Naive thymus-derived CD4-positive, alpha-beta T cell (primary cell): ENCODE measurements at regions of chr14 and their contacts with region 1.

Region 1: DNA sequence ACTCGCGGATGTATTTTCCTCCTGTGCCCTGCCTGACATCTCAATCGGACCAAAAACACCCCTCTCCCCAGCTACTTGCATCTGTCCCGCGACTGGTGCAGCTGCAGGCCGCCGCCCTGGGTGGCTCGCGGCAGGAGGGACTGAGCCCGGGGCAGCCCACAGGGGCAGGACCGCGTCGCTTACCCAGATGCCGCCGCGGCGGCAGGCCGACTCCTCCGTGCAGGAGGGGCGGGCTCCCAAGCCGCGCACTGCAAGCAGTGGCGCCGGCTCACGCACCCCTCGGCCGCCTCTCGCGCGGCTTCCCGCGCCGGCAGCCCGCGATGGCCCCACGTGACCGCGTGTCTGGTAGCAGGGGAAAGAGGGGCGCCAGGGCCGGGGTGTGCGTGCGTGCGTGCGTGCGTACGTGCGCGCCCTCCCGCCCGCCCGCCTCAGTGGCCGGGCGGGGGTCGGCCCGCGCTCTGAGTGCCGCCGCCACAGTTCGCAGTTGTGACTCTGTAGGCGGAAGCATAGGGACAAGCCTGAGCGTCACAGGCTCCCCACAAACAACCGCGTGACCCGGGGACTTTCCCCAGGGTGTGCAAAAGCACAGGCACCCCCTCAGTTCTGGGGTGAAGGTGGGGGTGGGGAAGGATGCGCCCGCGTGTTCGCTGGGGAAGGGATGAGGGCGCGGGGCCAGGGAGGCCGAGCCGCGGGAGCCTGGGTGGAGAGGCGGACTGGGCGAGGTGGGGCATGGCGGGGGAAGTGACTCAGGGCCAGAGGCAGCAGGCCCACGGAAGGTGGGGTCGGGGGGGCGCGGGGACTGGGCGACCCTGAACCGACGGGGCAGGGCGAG is at the start of gene ZBTB25:
- DNase-seq: peak; percentile 88 to 100 (median 98)
- ATAC-seq: peak; percentile 81
- H3K4me3 ChIP-seq: peak within 1 kb of the TSS; percentile 88
- H3K4me3 Mint-ChIP-seq: peak within 1 kb of the TSS; percentile 88 to 100 (median 98)
- H3K27ac ChIP-seq: peak within 1 kb of the TSS; percentile 99
- H3K27ac Mint-ChIP-seq: peak within 1 kb of the TSS; percentile 96 to 100 (median 100)
- H3K4me1 ChIP-seq: peaks cover 41 to 49% of the 10 kb centered on the region in 2 donors
- H3K4me1 Mint-ChIP-seq: peaks cover 44 to 70% (median 55%) of the 10 kb centered on the region in 7 donors
- H3K27me3 ChIP-seq: no peaks in the 10 kb centered on the region
- H3K27me3 Mint-ChIP-seq: peaks cover 0 to 3% (median 0%) of the 10 kb centered on the region in 5 donors
- total RNA-seq, gene ZBTB25: 37.6 to 88.0 (median 60.6) TPM

Region 2: GRCh38 chr14:63727774-63728728 is 775.6 kb before region 1 on chr14 and contains the start of gene SGPP1:
- CTCF ChIA-PET with region 1: no interaction called
- POLR2A ChIA-PET with region 1: interaction called, 3 read pairs
- intact Hi-C with region 1: loop called in 1 of 2 experiments (anchors 2 kb)
- DNase-seq: peak; percentile 60 to 83 (median 77)
- ATAC-seq: peak; percentile 95
- H3K4me3 ChIP-seq: peak within 1 kb of the TSS; percentile 99
- H3K4me3 Mint-ChIP-seq: peak within 1 kb of the TSS; percentile 97 to 100 (median 99)
- H3K27ac ChIP-seq: peak within 1 kb of the TSS; percentile 89
- H3K27ac Mint-ChIP-seq: peak within 1 kb of the TSS; percentile 94 to 99 (median 97)
- H3K4me1 ChIP-seq: peaks cover 11 to 16% of the 10 kb centered on the region in 2 donors
- H3K4me1 Mint-ChIP-seq: peaks cover 29 to 51% (median 44%) of the 10 kb centered on the region in 7 donors
- H3K27me3 ChIP-seq: no peaks in the 10 kb centered on the region
- H3K27me3 Mint-ChIP-seq: peaks cover 0 to 22% (median 0%) of the 10 kb centered on the region in 5 donors
- total RNA-seq, gene SGPP1: 15.1 to 17.7 (median 15.7) TPM

Region 3: GRCh38 chr14:64338616-64339316 is 164.9 kb before region 1 on chr14:
- CTCF ChIA-PET with region 1: interaction called, 17 read pairs
- POLR2A ChIA-PET with region 1: interaction called, 9 read pairs
- intact Hi-C with region 1: loop called (anchors 1 kb)
- DNase-seq: peak; percentile 50 to 84 (median 79)
- ATAC-seq: peak; percentile 87
- H3K4me3 ChIP-seq: peak overlapping the region; percentile 57
- H3K4me3 Mint-ChIP-seq: peak overlapping the region; percentile 87 to 99 (median 92)
- H3K27ac ChIP-seq: peak overlapping the region; percentile 72
- H3K27ac Mint-ChIP-seq: peak overlapping the region; percentile 81 to 91 (median 86)
- H3K4me1 ChIP-seq: peaks cover 5 to 10% of the 10 kb centered on the region in 2 donors
- H3K4me1 Mint-ChIP-seq: peaks cover 6 to 36% (median 19%) of the 10 kb centered on the region in 7 donors
- H3K27me3 ChIP-seq: no peaks in the 10 kb centered on the region
- H3K27me3 Mint-ChIP-seq: no peaks in the 10 kb centered on the region

Region 4: DNA sequence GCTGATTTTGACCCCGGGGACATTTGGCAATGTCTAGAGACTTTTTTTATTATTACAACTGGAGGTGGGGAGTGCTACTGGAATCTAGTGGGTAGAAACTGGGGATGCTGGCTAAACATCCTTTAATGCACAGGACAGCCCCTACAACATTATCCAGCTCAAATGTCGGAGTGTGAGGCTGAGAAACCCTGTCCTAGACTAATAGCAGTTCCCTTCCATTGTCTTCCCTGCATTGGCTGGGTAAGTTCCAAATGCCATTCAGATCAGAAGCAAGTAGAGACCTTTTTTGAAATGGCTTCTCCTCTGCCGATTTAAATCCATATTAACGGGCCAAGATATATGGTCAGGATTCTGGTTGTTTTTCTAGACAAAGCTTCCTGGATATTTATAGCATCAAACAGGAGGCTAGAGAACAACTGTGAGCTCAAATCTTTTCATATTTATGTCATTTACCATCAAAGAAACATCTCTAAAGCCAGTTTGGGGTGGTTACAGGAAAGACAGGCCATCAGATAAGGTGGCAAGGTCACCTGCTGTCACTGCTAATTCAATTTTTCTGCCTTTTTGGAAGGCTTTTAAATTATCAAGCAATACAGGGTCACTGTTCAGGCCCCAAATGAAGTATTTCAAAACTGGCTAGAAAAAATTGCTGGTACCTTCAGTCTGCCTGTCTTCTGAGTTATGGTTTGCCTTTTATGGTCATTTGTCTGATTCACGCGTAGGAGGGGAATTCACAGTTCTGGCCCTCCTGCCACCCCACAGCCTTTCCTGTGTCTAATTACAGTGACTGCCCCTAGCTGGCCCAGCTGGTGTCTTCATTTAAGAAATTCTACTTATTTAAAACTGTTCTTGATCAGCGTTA is 58.5 kb before region 1 on chr14:
- CTCF ChIA-PET with region 1: no interaction called
- POLR2A ChIA-PET with region 1: no interaction called
- intact Hi-C with region 1: loop called in 1 of 2 experiments (anchors 5 kb)
- DNase-seq: peak in 1 of 9 donors; percentile 45
- ATAC-seq: peak; percentile 86
- H3K4me3 ChIP-seq: no peak overlapping the region
- H3K4me3 Mint-ChIP-seq: peak overlapping the region in 1 of 10 donors; percentile 71
- H3K27ac ChIP-seq: no peak overlapping the region
- H3K27ac Mint-ChIP-seq: peak overlapping the region in 8 of 9 donors; percentile 32 to 88 (median 64)
- H3K4me1 ChIP-seq: peaks cover 0 to 16% of the 10 kb centered on the region in 2 donors
- H3K4me1 Mint-ChIP-seq: peaks cover 12 to 35% (median 16%) of the 10 kb centered on the region in 7 donors
- H3K27me3 ChIP-seq: no peaks in the 10 kb centered on the region
- H3K27me3 Mint-ChIP-seq: no peaks in the 10 kb centered on the region

Region 5: GRCh38 chr14:64478634-64479250 is 25.0 kb before region 1 on chr14:
- CTCF ChIA-PET with region 1: interaction called, 33 read pairs
- POLR2A ChIA-PET with region 1: interaction called, 157 read pairs
- intact Hi-C with region 1: no loop called
- DNase-seq: peak in 5 of 9 donors; percentile 18 to 38 (median 32)
- ATAC-seq: peak; percentile 51
- H3K4me3 ChIP-seq: no peak overlapping the region
- H3K4me3 Mint-ChIP-seq: no peak overlapping the region
- H3K27ac ChIP-seq: no peak overlapping the region
- H3K27ac Mint-ChIP-seq: peak overlapping the region in 1 of 9 donors; percentile 55
- H3K4me1 ChIP-seq: no peaks in the 10 kb centered on the region
- H3K4me1 Mint-ChIP-seq: peaks cover 0 to 22% (median 9%) of the 10 kb centered on the region in 7 donors
- H3K27me3 ChIP-seq: no peaks in the 10 kb centered on the region
- H3K27me3 Mint-ChIP-seq: no peaks in the 10 kb centered on the region

Region 6: DNA sequence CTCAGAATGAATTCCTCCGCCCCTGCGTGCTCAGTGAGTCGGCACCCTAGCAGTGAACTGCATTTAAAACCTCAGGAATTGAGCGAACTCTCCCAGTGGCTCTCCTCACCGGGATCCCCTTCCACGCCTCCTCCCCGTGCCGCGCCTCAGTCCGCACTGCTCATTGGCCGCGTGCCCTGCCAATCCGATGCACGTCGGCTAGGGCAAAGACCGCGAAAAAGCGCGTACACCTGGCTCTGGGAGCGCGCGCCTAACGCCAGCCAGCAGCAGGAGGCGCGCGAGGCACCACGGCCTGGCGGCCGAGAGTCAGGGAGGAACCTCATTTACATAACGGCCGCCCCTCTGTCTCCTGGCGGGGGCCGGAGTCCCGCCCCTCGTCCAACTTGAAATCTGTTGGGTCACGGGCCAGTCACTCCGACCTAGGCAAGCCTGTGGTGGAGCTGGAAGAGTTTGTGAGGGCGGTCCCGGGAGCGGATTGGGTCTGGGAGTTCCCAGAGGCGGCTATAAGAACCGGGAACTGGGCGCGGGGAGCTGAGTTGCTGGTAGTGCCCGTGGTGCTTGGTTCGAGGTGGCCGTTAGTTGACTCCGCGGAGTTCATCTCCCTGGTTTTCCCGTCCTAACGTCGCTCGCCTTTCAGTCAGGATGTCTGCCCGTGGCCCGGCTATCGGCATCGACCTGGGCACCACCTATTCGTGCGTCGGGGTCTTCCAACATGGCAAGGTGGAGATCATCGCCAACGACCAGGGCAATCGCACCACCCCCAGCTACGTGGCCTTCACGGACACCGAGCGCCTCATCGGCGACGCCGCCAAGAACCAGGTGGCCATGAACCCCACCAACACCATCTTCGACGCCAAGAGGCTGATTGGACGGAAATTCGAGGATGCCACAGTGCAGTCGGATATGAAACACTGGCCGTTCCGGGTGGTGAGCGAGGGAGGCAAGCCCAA is 36.8 kb after region 1 on chr14 and contains the start of gene HSPA2:
- CTCF ChIA-PET with region 1: no interaction called
- POLR2A ChIA-PET with region 1: interaction called, 18 read pairs
- intact Hi-C with region 1: loop called (anchors 1 kb)
- DNase-seq: peak; percentile 87 to 94 (median 91)
- ATAC-seq: peak; percentile 94
- H3K4me3 ChIP-seq: peak within 1 kb of the TSS; percentile 90
- H3K4me3 Mint-ChIP-seq: peak within 1 kb of the TSS; percentile 87 to 98 (median 94)
- H3K27ac ChIP-seq: peak within 1 kb of the TSS; percentile 53
- H3K27ac Mint-ChIP-seq: peak within 1 kb of the TSS; percentile 61 to 95 (median 81)
- H3K4me1 ChIP-seq: peaks cover 4 to 9% of the 10 kb centered on the region in 2 donors
- H3K4me1 Mint-ChIP-seq: peaks cover 21 to 44% (median 34%) of the 10 kb centered on the region in 7 donors
- H3K27me3 ChIP-seq: no peaks in the 10 kb centered on the region
- H3K27me3 Mint-ChIP-seq: peaks cover 0 to 54% (median 3%) of the 10 kb centered on the region in 5 donors
- total RNA-seq, gene HSPA2: 0.32 to 2.5 (median 0.76) TPM

Region 7: DNA sequence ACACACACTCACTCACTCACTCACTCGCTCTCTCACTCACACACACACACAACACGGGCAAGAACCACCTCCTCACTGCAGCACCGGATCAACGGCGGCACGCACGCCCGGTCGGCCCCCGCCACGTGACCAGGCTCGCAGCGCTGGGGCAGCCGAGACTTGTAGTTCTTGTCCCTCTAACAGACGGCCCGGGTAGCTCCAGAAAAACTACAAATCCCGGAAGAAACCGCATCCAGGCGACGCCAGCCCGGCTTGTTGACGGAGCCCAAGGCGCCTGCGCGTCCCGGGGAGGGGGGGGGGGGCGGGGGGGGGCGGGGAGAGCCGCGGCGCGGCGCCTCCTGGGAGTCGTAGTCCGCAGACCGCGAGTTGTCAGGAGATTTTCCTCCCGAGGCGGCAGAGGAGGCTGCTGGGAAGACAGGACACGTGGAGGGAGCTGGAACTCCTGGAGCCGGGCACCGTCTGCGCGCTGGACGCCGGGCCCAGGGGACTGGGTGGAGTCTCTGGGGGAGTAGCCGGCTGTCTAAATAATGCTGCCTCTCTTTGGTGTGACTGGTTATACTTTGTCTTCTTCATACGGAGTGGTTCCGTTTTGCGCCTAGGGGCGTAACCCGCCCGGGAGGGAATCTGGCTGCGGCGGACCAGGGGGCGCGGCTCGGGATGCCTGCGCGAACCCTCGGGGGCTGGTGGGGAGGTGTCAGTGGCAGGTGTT is 598.9 kb after region 1 on chr14 and contains the start of gene MAX:
- CTCF ChIA-PET with region 1: no interaction called
- POLR2A ChIA-PET with region 1: interaction called, 3 read pairs
- intact Hi-C with region 1: loop called in 1 of 2 experiments (anchors 1 kb)
- DNase-seq: peak; percentile 88 to 100 (median 99)
- ATAC-seq: peak; percentile 95
- H3K4me3 ChIP-seq: peak within 1 kb of the TSS; percentile 96
- H3K4me3 Mint-ChIP-seq: peak within 1 kb of the TSS; percentile 87 to 97 (median 91)
- H3K27ac ChIP-seq: peak within 1 kb of the TSS; percentile 100
- H3K27ac Mint-ChIP-seq: peak within 1 kb of the TSS; percentile 91 to 99 (median 94)
- H3K4me1 ChIP-seq: peaks cover 17 to 34% of the 10 kb centered on the region in 2 donors
- H3K4me1 Mint-ChIP-seq: peaks cover 28 to 43% (median 42%) of the 10 kb centered on the region in 7 donors
- H3K27me3 ChIP-seq: no peaks in the 10 kb centered on the region
- H3K27me3 Mint-ChIP-seq: peaks cover 0 to 12% (median 0%) of the 10 kb centered on the region in 5 donors
- total RNA-seq, gene MAX: 164 to 236 (median 202) TPM